GM12878 (cell line): ENCODE measurements at regions of chr5 and their contacts with region 1.

Region 1: GRCh38 chr5:33936004-33936380 is 194 bp upstream of the RXFP3 start:
- DNase-seq: no peak
- ATAC-seq: peak; percentile 30; the same call in 2 of the 3 replicates
- H3K4me3 ChIP-seq: peak overlapping the region; percentile 16; the same call in 1 of the 2 replicates
- H3K27ac ChIP-seq: no peak overlapping the region
- H3K4me1 ChIP-seq: peaks cover 16% of the 10 kb centered on the region
- H3K27me3 ChIP-seq: no peaks in the 10 kb centered on the region; a peak in 1 of 4 replicates
- CTCF ChIP-seq: 0 out of 6 replicates have a peak, but pooled peaks of 1 of the 3 experiments have one; percentile 8
- EP300 ChIP-seq: no peak
- POLR2A ChIP-seq: no peak
- RAD21 ChIP-seq: no peak

Region 2: DNA sequence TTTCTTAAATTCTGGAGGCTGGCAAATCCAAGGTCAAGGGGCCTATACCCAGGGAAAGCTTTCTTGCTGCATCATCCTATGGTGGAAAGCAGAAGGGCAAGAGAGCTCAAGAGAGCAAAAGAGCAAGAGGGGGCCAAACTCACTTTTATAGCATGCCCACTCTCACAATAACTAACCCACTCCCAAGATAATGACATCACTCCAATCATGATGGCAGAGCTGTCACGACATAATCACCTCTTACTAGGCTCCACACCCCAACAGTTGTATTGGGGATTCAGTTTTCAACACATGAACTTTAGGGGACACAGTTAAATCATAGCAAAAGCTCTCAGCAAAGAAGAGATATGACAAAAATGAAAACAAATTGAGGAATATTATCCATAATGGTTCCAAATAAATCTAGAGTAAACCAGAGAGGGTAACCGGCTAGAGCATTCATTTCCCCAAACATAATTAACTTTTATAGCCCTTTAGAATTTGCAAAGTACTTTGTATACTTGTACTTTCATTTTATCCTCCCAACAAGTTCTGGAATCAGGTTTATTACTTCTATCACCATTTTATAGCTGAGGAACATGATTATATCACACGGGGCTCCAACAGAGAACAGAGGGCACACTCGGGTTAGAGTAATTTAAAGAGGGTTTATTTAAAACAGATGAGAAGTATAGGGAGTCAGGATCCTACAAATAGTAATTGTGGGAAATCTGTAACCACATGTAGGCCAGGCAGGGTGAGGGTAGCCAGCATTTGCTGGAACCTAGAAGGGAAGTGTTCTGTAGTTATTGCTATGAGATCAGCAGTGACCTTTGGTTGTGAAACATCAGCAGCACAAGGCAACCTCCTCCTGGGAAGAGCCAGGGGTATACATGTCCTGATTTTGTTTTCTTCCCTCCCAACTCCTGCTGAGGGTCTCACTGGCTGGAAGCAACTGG is 502.4 kb before region 1 on chr5:
- CTCF ChIA-PET with region 1: interaction called, 70 read pairs
- POLR2A ChIA-PET with region 1: interaction called, 5 read pairs
- RAD21 ChIA-PET with region 1: interaction called, 83 read pairs
- SMC1A ChIA-PET with region 1: interaction called, 65 read pairs
- in situ Hi-C with region 1: no loop called
- intact Hi-C with region 1: loop called (anchors 1 kb)
- DNase-seq: no peak
- ATAC-seq: no peak
- H3K4me3 ChIP-seq: no peak overlapping the region
- H3K27ac ChIP-seq: no peak overlapping the region
- H3K4me1 ChIP-seq: no peaks in the 10 kb centered on the region
- H3K27me3 ChIP-seq: no peaks in the 10 kb centered on the region
- CTCF ChIP-seq: no peak
- EP300 ChIP-seq: no peak
- POLR2A ChIP-seq: no peak
- RAD21 ChIP-seq: no peak

Region 3: DNA sequence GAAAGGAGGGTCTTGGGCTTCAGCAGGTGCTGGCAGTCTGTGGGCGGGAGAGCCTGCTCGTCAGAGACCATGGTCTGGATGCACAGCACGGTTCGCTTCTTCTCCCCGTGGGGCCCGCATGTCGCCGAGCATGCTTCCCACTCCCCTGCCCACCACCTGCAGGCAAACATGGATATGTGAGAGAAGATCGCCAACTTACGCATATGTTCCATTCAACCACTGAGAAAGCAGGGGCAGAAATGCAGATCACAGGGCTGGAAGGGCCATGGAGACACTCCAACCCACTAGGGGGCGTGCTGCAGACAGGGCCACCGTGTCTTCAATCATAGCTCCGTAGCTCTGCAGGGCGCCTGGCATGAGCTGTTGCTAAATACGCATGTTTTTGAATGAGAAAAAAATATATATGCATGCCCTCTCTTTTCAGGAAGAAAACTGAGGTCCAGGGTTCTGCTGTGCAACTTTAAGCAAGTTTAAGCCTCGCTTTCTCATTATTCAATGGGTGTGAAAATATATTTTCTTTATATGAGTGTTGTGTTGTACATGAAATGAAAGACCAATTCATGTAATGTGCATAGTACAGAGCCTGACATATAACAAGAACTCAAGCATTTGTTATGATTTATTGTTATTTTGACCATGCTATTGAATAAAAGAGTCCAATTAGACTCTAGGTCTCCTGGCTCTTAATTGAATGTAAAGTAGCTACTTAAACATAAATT is 347.2 kb before region 1 on chr5:
- CTCF ChIA-PET with region 1: interaction called, 96 read pairs
- POLR2A ChIA-PET with region 1: no interaction called
- RAD21 ChIA-PET with region 1: interaction called, 55 read pairs
- SMC1A ChIA-PET with region 1: interaction called, 77 read pairs
- in situ Hi-C with region 1: no loop called
- intact Hi-C with region 1: loop called (anchors 2 kb)
- DNase-seq: no peak
- ATAC-seq: peak; percentile 83
- H3K4me3 ChIP-seq: no peak overlapping the region
- H3K27ac ChIP-seq: no peak overlapping the region
- H3K4me1 ChIP-seq: no peaks in the 10 kb centered on the region
- H3K27me3 ChIP-seq: no peaks in the 10 kb centered on the region
- CTCF ChIP-seq: peak; percentile 35 to 59 (median 53)
- EP300 ChIP-seq: no peak
- POLR2A ChIP-seq: no peak
- RAD21 ChIP-seq: peak; percentile 55

Region 4: GRCh38 chr5:33675958-33676464 is 260.0 kb before region 1 on chr5:
- CTCF ChIA-PET with region 1: interaction called, 42 read pairs
- POLR2A ChIA-PET with region 1: interaction called, 9 read pairs
- RAD21 ChIA-PET with region 1: interaction called, 31 read pairs
- SMC1A ChIA-PET with region 1: interaction called, 30 read pairs
- in situ Hi-C with region 1: no loop called
- intact Hi-C with region 1: loop called (anchors 1 kb)
- DNase-seq: peak; percentile 76
- ATAC-seq: peak; percentile 91
- H3K4me3 ChIP-seq: peak overlapping the region; percentile 10; the same call in 1 of the 2 replicates
- H3K27ac ChIP-seq: peak overlapping the region; percentile 88
- H3K4me1 ChIP-seq: peaks cover 27% of the 10 kb centered on the region
- H3K27me3 ChIP-seq: no peaks in the 10 kb centered on the region
- CTCF ChIP-seq: no peak
- EP300 ChIP-seq: peak in 1 of 2 experiments; percentile 41; a peak in 2 of 4 replicates
- POLR2A ChIP-seq: no peak
- RAD21 ChIP-seq: no peak

Region 5: GRCh38 chr5:33806738-33807442 is 129.1 kb before region 1 on chr5:
- CTCF ChIA-PET with region 1: no interaction called
- POLR2A ChIA-PET with region 1: no interaction called
- RAD21 ChIA-PET with region 1: no interaction called
- SMC1A ChIA-PET with region 1: no interaction called
- in situ Hi-C with region 1: no loop called
- intact Hi-C with region 1: no loop called
- DNase-seq: no peak
- ATAC-seq: no peak
- H3K4me3 ChIP-seq: no peak overlapping the region
- H3K27ac ChIP-seq: no peak overlapping the region
- H3K4me1 ChIP-seq: no peaks in the 10 kb centered on the region; the same call in 1 of the 2 replicates
- H3K27me3 ChIP-seq: no peaks in the 10 kb centered on the region
- CTCF ChIP-seq: no peak
- EP300 ChIP-seq: no peak
- POLR2A ChIP-seq: no peak
- RAD21 ChIP-seq: no peak

Region 6: GRCh38 chr5:33850100-33850594 is 85.8 kb before region 1 on chr5:
- CTCF ChIA-PET with region 1: interaction called, 32 read pairs
- POLR2A ChIA-PET with region 1: interaction called, 3 read pairs
- RAD21 ChIA-PET with region 1: interaction called, 111 read pairs
- SMC1A ChIA-PET with region 1: interaction called, 80 read pairs
- in situ Hi-C with region 1: no loop called
- intact Hi-C with region 1: loop called (anchors 1 kb)
- DNase-seq: peak; percentile 99
- ATAC-seq: peak; percentile 96
- H3K4me3 ChIP-seq: 0 out of 2 replicates have a peak overlapping the region, but pooled peaks have one; percentile 5
- H3K27ac ChIP-seq: peak overlapping the region; percentile 97
- H3K4me1 ChIP-seq: peaks cover 72% of the 10 kb centered on the region
- H3K27me3 ChIP-seq: no peaks in the 10 kb centered on the region
- CTCF ChIP-seq: peak in 1 of 3 experiments; percentile 23; a peak in 1 of 6 replicates
- EP300 ChIP-seq: peak; percentile 99
- POLR2A ChIP-seq: no peak
- RAD21 ChIP-seq: peak; percentile 54

Region 7: DNA sequence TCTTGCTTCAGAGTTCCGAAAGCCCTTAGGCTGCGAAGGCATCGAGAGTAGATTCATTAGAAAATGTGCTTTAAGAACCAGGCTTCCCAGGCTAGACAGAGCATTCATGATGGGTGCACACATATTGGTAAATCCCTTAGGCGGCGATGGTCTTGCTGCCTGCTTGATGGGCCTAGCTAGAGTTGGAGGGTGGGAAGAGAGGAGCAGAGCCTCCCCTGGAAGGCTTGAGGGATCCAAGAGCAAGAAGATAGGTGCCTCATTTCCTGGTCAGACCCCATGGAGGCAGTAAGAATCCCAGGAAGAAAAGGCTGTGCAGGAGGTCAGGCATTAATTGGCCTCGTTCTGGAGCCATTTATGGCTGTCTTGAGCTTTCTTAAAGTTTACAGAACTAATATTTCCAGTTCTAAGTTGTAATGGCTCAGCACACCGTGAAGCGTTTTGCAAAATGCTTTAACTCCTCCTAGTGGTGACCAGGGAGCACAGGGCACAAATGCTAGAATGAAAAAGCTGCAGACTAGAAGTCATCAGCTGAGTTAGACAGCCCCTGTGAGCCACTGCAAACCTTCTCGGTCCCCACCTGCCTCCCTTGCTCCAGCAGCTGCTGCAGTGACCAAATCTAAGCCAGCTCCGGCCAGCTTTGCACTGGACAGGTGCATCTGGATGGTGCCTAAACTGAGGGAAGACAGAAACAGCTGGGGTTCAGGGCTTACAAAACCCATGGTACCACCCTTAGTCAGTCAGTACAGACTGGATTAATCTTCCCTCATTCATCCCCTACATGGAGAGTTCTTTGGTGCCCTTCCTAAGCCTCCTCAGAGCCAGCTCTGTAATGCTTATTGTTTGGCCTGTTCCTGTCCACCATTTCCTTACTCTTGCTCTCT is 33.8 kb after region 1 on chr5:
- CTCF ChIA-PET with region 1: interaction called, 39 read pairs
- POLR2A ChIA-PET with region 1: interaction called, 5 read pairs
- RAD21 ChIA-PET with region 1: interaction called, 46 read pairs
- SMC1A ChIA-PET with region 1: interaction called, 31 read pairs
- in situ Hi-C with region 1: no loop called
- intact Hi-C with region 1: no loop called
- DNase-seq: peak; percentile 27
- ATAC-seq: peak; percentile 93
- H3K4me3 ChIP-seq: no peak overlapping the region
- H3K27ac ChIP-seq: no peak overlapping the region
- H3K4me1 ChIP-seq: peaks cover 17% of the 10 kb centered on the region
- H3K27me3 ChIP-seq: no peaks in the 10 kb centered on the region
- CTCF ChIP-seq: peak; percentile 80 to 90 (median 88)
- EP300 ChIP-seq: no peak
- POLR2A ChIP-seq: no peak
- RAD21 ChIP-seq: peak; percentile 94

Region 8: DNA sequence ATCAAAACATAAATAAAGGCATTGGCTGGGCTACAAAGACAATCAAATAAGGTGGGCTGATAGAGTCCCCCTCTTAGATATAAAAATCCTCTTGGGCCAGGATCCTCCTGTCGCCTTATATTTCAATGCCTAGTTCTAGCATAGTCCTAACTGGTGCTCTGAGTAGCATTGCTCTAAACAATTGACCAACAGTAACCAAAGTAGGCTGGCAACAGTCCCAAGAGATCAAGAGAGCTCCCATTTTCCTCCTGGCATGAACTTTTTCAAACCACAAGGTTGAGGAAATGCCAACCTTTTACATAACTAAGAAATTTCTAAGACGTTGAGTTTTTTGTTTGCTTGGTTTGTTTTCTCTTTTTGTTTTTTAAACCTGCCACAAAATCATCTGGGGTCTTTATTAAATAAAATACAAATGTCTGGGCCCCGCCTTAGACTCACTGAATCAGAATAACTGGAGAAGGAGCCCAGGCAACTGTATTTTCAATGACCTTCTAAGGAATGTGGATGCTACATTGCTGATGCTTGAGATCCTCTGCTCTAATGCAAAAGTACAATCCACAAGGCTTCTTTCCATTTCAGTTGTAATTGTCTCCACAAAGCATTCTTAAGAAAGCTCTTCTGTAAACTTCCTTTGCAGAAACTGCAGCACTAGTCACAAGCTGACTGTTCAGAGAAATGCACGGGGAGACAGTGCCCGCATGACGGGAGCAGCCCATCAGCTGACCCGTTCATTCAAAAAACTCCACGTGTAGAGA is 45.6 kb after region 1 on chr5:
- CTCF ChIA-PET with region 1: no interaction called
- POLR2A ChIA-PET with region 1: no interaction called
- RAD21 ChIA-PET with region 1: no interaction called
- SMC1A ChIA-PET with region 1: no interaction called
- in situ Hi-C with region 1: no loop called
- intact Hi-C with region 1: no loop called
- DNase-seq: no peak
- ATAC-seq: no peak
- H3K4me3 ChIP-seq: no peak overlapping the region
- H3K27ac ChIP-seq: no peak overlapping the region
- H3K4me1 ChIP-seq: no peaks in the 10 kb centered on the region
- H3K27me3 ChIP-seq: no peaks in the 10 kb centered on the region
- CTCF ChIP-seq: no peak
- EP300 ChIP-seq: no peak
- POLR2A ChIP-seq: no peak
- RAD21 ChIP-seq: no peak